OCI-LY7 (cell line): ENCODE measurements at regions of chr12 and their contacts with region 1.

Region 1: DNA sequence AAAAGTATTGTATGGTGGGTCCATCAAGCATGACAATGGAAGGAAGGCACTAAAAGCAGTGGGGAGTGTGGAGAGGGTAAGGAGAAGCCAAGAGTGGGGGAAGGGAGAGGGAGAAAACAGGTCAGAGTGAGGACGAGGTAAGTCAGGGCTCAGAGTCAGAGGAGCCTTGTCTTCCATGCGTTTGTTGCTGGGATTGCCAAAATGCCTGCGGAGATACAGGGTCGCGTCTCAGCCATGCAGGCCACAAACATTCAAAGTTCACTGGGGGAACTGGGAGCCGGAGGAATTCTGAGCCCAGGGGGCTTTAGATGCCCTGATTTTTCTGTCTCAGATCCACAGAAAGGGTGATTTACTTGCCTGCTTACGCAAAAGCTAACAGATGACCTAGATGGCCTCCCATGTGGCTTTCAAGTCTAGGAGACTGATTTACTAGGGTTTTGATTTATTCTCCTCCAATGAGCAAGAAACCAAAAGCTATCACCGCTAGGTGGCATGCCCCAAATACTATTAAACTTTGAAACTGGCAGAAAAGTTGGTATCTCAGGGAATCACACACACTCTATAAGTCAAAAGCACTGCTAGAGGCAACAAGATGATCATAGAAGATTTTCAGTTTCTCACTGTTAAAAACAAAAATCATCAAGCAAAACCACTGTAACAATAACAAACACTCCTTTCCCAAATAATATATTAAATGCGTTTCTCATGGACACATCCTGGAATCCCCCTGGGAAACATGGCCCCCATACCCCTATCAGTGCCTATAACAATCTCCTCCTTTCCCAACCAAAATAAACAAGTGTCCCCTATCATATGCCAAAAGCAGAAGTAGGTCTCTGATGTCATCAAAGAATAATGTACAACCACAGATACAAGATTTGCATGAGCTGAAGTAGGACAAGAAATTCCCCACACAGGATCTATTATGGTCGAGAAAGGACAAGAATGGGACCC is 26.6 kb upstream of the MDM1 start:
- DNase-seq: peak; percentile 80
- H3K4me3 ChIP-seq: no peak overlapping the region
- H3K27ac ChIP-seq: no peak overlapping the region
- H3K4me1 ChIP-seq: peaks cover 9% of the 10 kb centered on the region
- CTCF ChIP-seq: peak; percentile 91

Region 2: DNA sequence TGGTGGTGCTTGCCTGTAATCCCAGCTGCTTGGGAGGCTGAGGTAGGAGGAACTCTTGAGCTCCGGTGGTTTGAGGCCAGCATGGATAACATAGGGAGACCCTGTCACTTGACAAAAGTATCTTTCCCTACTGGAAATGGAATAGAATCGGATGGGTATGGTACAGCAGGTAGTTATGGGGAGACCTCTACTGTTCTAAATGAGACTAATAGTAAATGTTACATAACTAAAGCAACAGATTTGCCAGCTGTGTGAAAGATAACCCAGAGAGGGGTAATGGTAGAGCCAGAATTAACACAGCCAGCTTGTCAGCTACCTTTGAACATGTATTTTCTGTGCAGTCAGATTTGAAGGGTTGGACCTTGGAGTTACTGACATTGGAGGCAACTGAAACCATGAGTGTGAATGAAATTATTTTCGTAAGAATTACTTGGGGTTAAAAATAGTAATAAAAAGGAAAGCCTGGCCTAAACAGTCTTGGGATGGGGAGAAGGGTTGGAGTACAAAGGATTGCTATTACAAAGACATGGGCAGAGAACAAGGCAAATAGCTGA is 306.3 kb after region 1 on chr12:
- CTCF ChIA-PET with region 1: no interaction called
- POLR2A ChIA-PET with region 1: no interaction called
- intact Hi-C with region 1: loop called (anchors 10 kb)
- DNase-seq: no peak
- H3K4me3 ChIP-seq: no peak overlapping the region
- H3K27ac ChIP-seq: no peak overlapping the region
- H3K4me1 ChIP-seq: peaks cover 24% of the 10 kb centered on the region
- CTCF ChIP-seq: peak; percentile 40; the same call in 1 of the 2 replicates

Region 3: GRCh38 chr12:68686595-68687521 is 328.0 kb after region 1 on chr12 and contains the start of gene NUP107:
- CTCF ChIA-PET with region 1: no interaction called
- POLR2A ChIA-PET with region 1: interaction called, 3 read pairs
- intact Hi-C with region 1: loop called (anchors 5 kb)
- DNase-seq: peak; percentile 99
- H3K4me3 ChIP-seq: peak within 1 kb of the TSS; percentile 98
- H3K27ac ChIP-seq: peak within 1 kb of the TSS; percentile 34
- H3K4me1 ChIP-seq: peaks cover 21% of the 10 kb centered on the region
- CTCF ChIP-seq: no peak
- total RNA-seq, gene NUP107: 106 and 113 TPM in 2 replicates

Region 4: GRCh38 chr12:68745904-68746571 is 387.2 kb after region 1 on chr12 and contains the start of gene SLC35E3:
- CTCF ChIA-PET with region 1: no interaction called
- POLR2A ChIA-PET with region 1: no interaction called
- intact Hi-C with region 1: loop called (anchors 10 kb)
- DNase-seq: peak; percentile 96
- H3K4me3 ChIP-seq: peak within 1 kb of the TSS; percentile 92
- H3K27ac ChIP-seq: peak within 1 kb of the TSS; percentile 59
- H3K4me1 ChIP-seq: peaks cover 46% of the 10 kb centered on the region
- CTCF ChIP-seq: no peak
- total RNA-seq, gene SLC35E3: 24.6 and 26.6 TPM in 2 replicates

Region 5: DNA sequence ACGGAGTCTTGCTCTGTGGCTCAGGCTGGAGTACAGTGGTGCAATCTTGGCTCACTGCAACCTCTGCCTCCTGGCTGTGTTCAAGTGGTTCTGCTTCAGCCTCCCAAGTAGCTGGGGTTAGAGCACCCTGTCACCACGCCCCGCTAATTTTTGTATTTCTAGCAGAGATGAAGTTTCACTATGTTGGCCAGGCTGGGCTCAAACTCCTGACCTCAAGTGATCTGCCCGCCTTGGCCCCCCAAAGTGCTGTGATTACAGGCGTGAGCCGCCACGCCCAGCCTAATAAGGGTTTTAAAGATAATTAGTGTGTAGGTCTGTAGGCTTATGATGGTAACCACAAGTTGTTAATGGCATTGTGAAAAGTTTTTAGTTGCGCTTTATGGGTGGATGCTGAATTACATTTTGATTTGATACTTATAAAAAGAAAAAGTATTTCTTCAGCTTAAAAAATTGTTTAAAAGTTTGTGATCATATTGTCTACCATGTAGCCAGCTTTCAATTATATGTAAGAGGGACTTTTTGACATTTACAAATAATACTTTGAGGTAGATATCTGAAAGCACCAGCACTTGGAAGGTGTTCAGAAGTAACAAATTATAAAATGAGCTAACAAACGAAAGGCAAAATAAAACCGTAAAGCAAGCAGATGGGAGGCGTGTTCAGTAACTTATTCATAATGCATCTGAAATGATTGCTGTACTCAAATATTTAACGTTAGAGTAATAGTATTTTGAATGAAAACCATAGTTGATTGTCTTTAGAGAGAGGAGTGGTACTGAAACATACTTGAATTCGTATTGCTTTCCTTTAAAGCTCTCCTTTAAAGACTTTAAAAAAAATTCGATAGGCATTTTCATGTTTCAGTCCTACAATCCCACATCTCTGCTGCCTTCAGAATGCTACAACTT is 486.2 kb after region 1 on chr12:
- CTCF ChIA-PET with region 1: no interaction called
- POLR2A ChIA-PET with region 1: no interaction called
- intact Hi-C with region 1: loop called (anchors 10 kb)
- DNase-seq: no peak
- H3K4me3 ChIP-seq: no peak overlapping the region
- H3K27ac ChIP-seq: no peak overlapping the region
- H3K4me1 ChIP-seq: no peaks in the 10 kb centered on the region
- CTCF ChIP-seq: no peak